ENCODE measurements at regions of chr15 and their contacts with region 1.

Region 1: GRCh38 chr15:75201609-75202250 is at the start of gene C15orf39:
- DNase-seq: peak; percentile 76
- H3K4me3 ChIP-seq: peak within 1 kb of the TSS; percentile 82 to 97
- H3K27ac ChIP-seq: peak within 1 kb of the TSS; percentile 89 to 96
- H3K4me1 ChIP-seq: peaks cover 59% of the 10 kb centered on the region
- H3K27me3 ChIP-seq: no peaks in the 10 kb centered on the region
- CTCF ChIP-seq: peak; percentile 93 to 99 (median 98)
- POLR2A ChIP-seq: peak; percentile 86
- total RNA-seq, gene C15orf39: 167 to 168 TPM

Region 2: GRCh38 chr15:75029378-75030022 is 172.2 kb before region 1 on chr15:
- intact Hi-C with region 1: loop called (anchors 5 kb)
- DNase-seq: peak; percentile 97
- H3K4me3 ChIP-seq: no peak overlapping the region
- H3K27ac ChIP-seq: peak overlapping the region in 1 of 2 donors; percentile 34
- H3K4me1 ChIP-seq: peaks cover 24% of the 10 kb centered on the region
- H3K27me3 ChIP-seq: no peaks in the 10 kb centered on the region
- CTCF ChIP-seq: peak; percentile 92 to 99 (median 98)
- POLR2A ChIP-seq: no peak

Region 3: GRCh38 chr15:75042730-75043508 is 158.8 kb before region 1 on chr15:
- intact Hi-C with region 1: loop called (anchors 5 kb)
- DNase-seq: peak; percentile 92
- H3K4me3 ChIP-seq: no peak overlapping the region
- H3K27ac ChIP-seq: peak overlapping the region; percentile 72 to 90
- H3K4me1 ChIP-seq: peaks cover 65% of the 10 kb centered on the region
- H3K27me3 ChIP-seq: no peaks in the 10 kb centered on the region
- CTCF ChIP-seq: peak; percentile 38 to 71 (median 58)
- POLR2A ChIP-seq: no peak